WTC11 (cell line): ENCODE measurements at regions of chr17 and their contacts with region 1.

Region 1: DNA sequence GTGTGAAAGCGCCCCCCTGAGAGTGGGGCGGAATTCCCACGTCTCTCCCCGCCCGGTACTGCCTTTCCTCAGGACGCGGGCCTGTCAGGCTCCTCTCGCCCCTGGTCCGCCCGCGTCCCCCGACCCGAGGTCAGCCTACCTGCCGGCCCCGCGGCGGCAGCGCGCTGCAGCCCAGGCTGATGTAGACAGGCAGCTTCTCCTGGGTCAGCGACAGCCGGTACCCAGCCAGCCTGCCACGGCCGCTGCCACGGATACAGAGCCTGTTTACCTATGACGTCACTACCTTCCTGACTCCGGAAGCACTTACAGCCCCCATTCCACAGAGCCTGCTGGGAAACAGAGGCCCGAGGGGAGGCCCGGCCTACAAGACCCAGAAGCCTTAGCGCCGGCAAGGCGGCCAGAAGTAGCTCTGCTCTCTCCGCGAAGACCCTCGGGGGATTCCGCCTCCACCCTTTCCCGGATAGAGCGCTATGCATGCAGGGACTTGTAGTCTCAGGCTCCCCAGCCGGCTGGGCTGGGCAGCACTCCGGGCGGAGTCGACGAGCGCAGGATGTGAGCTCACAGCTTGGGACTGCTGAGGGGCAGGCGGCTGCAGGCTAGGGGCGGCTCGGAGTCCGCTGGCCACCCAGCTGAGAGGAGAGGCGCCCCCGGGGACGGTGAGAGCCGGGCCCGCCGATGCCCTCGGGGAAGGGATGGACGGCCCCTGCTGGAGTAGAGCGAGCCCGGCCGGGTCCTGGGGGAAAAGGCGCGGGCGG is at the starts of genes IFT20 and TNFAIP1:
- DNase-seq: peak; percentile 99
- ATAC-seq: peak; percentile 97
- H3K4me3 Mint-ChIP-seq: peak within 1 kb of the TSS; percentile 99
- H3K27ac Mint-ChIP-seq: peak within 1 kb of the TSS; percentile 99
- H3K4me1 Mint-ChIP-seq: peaks cover 20% of the 10 kb centered on the region
- H3K27me3 Mint-ChIP-seq: no peaks in the 10 kb centered on the region
- CTCF ChIP-seq: no peak
- total RNA-seq, gene IFT20: 17.6 to 19.3 TPM (median 18.3 TPM) in 3 replicates
- total RNA-seq, gene TNFAIP1: 16.9 to 21.3 TPM (median 17.1 TPM) in 3 replicates

Region 2: GRCh38 chr17:28318759-28319660 is 16.4 kb before region 1 on chr17 and contains the start of gene TMEM97:
- CTCF ChIA-PET with region 1: interaction called, 17 read pairs
- POLR2A ChIA-PET with region 1: interaction called, 17 read pairs
- DNase-seq: peak; percentile 95
- ATAC-seq: peak; percentile 93
- H3K4me3 Mint-ChIP-seq: peak within 1 kb of the TSS; percentile 77
- H3K27ac Mint-ChIP-seq: peak within 1 kb of the TSS; percentile 91
- H3K4me1 Mint-ChIP-seq: peaks cover 50% of the 10 kb centered on the region
- H3K27me3 Mint-ChIP-seq: no peaks in the 10 kb centered on the region; the same call in 1 of the 2 replicates
- CTCF ChIP-seq: no peak
- total RNA-seq, gene TMEM97: 68.0 to 86.5 TPM (median 83.1 TPM) in 3 replicates

Region 3: DNA sequence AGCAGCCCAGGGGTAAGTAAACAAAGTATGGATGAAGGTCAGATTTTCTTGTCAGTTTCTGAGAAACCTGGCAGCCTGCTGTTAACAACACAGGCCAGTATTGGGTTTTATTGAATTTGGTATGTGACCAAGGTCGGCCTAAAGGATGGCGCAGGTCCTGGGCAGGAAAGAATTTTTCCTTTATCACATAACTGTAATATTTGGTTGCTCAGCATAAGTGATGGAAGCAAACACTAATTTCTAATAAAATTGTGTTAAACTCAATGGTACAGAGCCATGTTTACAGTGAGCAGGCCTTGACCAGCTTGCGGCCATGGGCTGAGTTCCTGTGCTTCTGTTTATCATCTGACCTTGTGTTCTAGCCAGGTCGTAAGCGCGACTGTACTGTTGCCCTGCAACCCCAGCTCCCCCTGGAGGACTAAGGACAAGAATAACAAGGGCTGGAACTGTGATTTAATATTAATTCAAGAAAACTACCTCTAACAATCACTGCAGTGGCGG is 11.4 kb after region 1 on chr17:
- CTCF ChIA-PET with region 1: interaction called, 26 read pairs
- POLR2A ChIA-PET with region 1: interaction called, 6 read pairs
- DNase-seq: no peak
- ATAC-seq: peak; percentile 53
- H3K4me3 Mint-ChIP-seq: no peak overlapping the region
- H3K27ac Mint-ChIP-seq: no peak overlapping the region
- H3K4me1 Mint-ChIP-seq: peaks cover 6% of the 10 kb centered on the region; the same call in 1 of the 2 replicates
- H3K27me3 Mint-ChIP-seq: no peaks in the 10 kb centered on the region
- CTCF ChIP-seq: no peak

Region 4: DNA sequence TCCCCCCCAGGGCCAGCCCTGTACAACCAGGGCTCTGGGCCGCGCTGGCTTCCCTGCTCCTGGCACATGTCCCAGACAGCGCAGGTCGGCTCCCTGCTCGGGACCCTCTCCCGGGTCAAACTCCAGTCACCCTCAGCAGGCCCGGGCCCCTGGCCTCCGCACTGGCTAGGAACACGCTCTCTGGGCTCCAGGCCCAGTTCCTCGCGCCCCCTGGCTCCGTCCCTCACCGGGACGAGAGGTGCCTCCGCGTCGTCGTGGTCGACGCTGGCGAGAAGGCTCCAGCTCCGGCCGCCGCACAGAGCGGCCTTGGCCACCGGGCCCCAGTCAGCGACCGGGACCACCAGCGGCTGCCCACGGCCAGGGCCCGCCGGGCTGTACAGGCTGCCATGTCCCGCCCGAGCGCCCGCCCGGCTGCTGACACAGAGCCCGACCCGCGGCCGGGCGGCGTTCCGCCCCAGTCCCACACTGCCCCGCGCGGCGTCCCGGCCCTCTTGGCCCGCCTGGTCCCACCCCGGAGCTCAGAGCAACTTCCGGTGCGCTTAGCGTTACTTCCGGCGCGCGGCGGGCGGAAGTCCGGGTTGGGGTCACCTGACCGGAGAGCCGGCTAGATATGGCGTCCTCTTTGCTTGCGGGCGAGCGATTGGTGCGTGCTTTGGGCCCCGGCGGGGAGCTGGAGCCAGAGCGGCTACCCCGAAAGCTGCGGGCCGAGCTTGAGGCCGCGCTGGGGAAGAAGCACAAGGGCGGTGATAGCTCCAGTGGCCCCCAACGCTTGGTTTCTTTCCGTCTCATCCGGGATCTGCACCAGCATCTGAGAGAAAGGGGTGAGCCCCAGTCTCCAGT is 21.9 kb after region 1 on chr17 and contains the start of gene POLDIP2:
- CTCF ChIA-PET with region 1: interaction called, 11 read pairs
- POLR2A ChIA-PET with region 1: interaction called, 16 read pairs
- DNase-seq: peak; percentile 95
- ATAC-seq: peak; percentile 99
- H3K4me3 Mint-ChIP-seq: peak within 1 kb of the TSS; percentile 91
- H3K27ac Mint-ChIP-seq: peak within 1 kb of the TSS; percentile 98
- H3K4me1 Mint-ChIP-seq: peaks cover 13% of the 10 kb centered on the region
- H3K27me3 Mint-ChIP-seq: no peaks in the 10 kb centered on the region
- CTCF ChIP-seq: no peak
- total RNA-seq, gene POLDIP2: 79.2 to 85.4 TPM (median 79.7 TPM) in 3 replicates

Region 5: GRCh38 chr17:28371245-28372202 is 36.1 kb after region 1 on chr17 and contains the start of gene SARM1:
- CTCF ChIA-PET with region 1: interaction called, 15 read pairs
- POLR2A ChIA-PET with region 1: interaction called, 3 read pairs
- DNase-seq: peak; percentile 99
- ATAC-seq: peak; percentile 93
- H3K4me3 Mint-ChIP-seq: peak within 1 kb of the TSS; percentile 75
- H3K27ac Mint-ChIP-seq: peak within 1 kb of the TSS; percentile 92
- H3K4me1 Mint-ChIP-seq: peaks cover 21% of the 10 kb centered on the region
- H3K27me3 Mint-ChIP-seq: peaks cover 45% of the 10 kb centered on the region
- CTCF ChIP-seq: no peak
- total RNA-seq, gene SARM1: 3.8 to 4.7 TPM (median 4.7 TPM) in 3 replicates

Region 6: DNA sequence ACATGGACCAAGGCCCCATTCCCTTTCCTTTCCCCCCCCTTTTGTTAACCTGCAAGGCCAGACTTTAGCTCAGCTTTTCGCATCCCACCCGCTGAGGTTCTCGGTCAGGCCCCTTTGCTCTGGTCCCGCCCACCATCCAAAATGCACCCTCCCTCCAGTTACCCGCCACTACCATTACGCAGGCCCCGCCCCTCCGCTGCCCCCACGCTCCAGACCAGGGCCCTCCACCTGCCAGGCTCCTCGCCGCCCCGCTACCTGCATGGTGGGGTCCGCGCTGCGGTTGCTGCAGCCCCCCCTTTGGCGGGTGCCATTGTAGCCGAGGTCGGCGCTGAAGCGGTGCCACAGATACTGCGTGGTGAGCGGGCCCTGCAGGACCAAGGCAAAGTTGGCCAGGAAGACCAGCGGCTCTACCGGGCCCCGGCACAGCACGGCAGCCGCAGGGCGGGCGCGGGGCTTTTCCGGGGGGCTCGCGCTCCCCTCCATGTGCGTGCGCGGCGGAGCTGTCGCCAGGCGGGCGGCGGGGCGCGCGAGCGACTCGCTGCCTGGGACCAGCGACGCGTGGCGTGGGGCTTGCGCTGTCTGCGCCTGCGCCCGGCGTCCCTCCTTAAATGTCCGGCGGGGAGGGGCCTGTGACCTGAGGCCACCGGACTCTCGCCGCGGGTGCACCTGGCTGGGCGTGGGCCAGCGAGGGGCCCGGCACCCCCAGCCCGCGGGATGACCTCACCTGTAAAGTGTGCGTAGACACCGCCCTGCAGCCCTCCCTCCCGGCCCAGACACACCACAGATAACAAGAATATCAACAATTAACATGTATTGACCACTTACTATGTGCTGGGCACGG is 70.5 kb after region 1 on chr17 and contains the start of gene SLC46A1:
- CTCF ChIA-PET with region 1: interaction called, 17 read pairs
- POLR2A ChIA-PET with region 1: no interaction called
- DNase-seq: peak; percentile 80
- ATAC-seq: peak; percentile 53
- H3K4me3 Mint-ChIP-seq: peak within 1 kb of the TSS; percentile 78
- H3K27ac Mint-ChIP-seq: peak within 1 kb of the TSS; percentile 87
- H3K4me1 Mint-ChIP-seq: peaks cover 78% of the 10 kb centered on the region
- H3K27me3 Mint-ChIP-seq: peaks cover 31% of the 10 kb centered on the region
- CTCF ChIP-seq: no peak
- total RNA-seq, gene SLC46A1: 5.7 to 6.7 TPM (median 6.6 TPM) in 3 replicates